ENCODE measurements at regions of chr1 and their contacts with region 1.

Region 1: GRCh38 chr1:146032631-146033219 is 11.2 kb upstream of the HJV start:
- DNase-seq: no peak
- H3K4me3 Mint-ChIP-seq: no peak overlapping the region
- H3K27ac Mint-ChIP-seq: no peak overlapping the region
- H3K4me1 Mint-ChIP-seq: peaks cover 36% of the 10 kb centered on the region
- H3K27me3 Mint-ChIP-seq: peaks cover 25% of the 10 kb centered on the region

Region 2: DNA sequence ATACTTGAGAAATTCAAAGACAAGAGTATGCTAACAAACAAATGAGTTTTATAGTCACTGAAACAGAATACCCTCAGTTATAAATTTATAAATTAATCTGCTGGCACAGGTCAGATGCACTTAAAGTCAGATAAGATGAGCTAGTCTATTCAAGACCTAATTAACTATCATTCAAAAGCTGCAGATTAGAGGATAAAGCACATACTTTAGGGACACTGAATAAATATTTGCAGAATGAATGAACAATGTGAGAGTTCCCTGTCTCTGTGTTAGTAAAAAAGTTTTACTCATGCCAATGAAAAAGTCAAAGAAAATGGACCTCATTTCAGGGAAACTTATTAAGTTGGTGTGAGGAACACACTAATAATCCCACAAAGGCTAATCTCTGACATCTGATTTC is 267.2 kb before region 1 on chr1:
- CTCF ChIA-PET with region 1: no interaction called
- DNase-seq: no peak
- H3K4me3 Mint-ChIP-seq: no peak overlapping the region
- H3K27ac Mint-ChIP-seq: no peak overlapping the region
- H3K4me1 Mint-ChIP-seq: no peaks in the 10 kb centered on the region
- H3K27me3 Mint-ChIP-seq: no peaks in the 10 kb centered on the region

Region 3: DNA sequence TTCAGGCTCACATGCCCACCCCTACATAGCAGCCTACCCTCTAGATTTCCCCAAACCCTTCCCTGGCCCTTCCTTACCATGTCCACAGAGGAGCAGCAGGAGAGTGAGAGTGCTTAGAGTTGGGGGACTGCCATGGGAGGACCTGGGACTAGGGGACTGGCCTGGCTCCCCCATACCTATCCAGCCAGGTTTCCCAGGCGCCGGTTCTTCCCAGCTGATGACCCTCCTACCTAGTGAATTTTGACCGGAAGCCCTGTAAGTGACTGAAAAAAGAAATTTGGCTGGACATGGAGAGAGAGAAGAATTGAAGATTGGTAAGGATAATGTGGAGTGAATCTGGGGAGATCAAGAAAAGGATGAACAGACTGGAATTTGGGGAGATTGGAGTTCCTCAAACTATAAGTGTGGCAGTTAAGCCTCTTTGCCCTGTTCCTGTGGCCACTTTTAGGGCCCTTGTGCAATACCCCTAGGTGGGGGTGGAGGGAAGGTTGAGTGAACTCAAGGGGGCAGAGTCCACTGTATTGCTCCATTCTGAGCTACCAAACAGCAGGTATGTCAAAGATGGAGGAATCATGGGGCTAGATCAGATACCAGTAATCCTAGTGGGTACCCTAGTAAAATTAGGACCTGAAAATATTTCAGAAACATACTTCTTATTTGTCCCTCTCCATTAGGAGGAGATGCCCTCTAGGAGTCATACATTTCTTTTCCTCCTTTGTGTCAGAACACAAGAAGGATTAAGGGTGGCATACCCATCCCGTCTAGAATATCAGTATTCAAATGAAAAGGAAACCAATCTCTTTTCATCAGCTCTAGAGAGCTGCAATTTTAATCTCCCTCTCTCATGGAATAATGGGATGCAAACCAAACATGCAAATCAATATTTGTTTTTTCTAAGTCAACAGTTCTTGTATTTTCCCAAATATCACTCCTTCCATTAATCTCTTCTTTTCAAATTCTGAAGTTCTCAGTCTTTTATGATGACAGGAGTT is 12.4 kb before region 1 on chr1:
- CTCF ChIA-PET with region 1: interaction called, 11 read pairs
- DNase-seq: no peak
- H3K4me3 Mint-ChIP-seq: no peak overlapping the region
- H3K27ac Mint-ChIP-seq: no peak overlapping the region
- H3K4me1 Mint-ChIP-seq: peaks cover 9% of the 10 kb centered on the region
- H3K27me3 Mint-ChIP-seq: peaks cover 87% of the 10 kb centered on the region